RWPE1 (cell line): ENCODE measurements at regions of chr1 and their contacts with region 1.

Region 1: DNA sequence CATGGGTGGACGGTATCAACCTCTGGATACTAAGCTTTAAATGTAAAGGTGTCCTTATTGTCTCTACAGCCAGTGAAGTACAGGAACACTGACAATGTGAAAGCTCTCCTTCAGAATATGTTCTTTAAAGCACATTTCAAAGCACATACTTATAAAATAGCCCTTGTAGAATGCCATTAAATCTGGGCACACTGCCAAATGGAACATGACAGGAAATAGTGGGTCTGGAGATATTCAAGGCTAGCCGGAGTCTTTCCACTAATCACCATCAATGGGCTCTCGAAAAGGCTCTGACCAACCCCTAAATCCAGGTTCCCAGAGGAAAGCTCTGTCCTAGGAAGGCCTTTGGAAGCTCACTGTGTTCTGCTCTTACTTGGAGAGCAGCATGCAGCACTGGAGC is 46.6 kb downstream of the PLD5 start:
- DNase-seq: no peak
- H3K27ac ChIP-seq: no peak overlapping the region
- CTCF ChIP-seq: no peak

Region 2: DNA sequence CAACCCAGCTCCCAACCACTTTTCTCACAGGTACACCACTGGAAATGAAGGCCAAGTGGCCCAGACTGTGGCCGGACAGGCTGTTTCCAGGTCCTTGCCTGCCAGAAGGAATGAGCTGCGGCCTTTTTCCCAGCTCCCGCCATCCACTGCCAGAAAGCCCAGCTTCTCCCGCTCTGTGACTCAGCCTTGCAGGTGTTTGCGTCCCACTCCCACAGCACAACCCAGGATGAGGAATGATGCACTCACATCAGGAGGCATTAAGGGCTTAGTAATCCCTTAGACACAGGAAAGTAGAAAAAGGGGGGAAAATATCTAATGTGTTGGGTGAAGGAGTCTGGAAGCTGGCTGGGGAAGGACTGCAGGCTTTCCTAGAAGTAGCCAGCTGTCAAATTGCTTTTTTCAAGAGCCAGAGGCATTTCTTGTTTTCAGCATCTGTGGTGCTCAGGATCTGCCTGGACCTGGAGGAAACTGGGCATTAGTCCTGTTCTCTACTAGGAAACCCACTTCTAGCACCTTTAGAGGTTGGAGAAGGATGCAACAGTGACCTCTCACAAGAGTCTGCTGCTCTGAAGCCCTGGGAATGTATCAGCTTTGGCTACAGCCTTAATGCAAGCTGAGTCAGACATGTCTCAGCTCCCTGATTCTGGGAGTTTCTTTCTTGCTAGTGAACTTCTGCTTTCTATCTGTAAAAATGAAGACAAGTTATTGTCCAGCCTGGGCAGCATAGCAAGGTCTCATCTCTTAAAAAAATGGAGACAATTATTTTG is 465.9 kb before region 1 on chr1:
- CTCF ChIA-PET with region 1: no interaction called
- POLR2A ChIA-PET with region 1: no interaction called
- DNase-seq: no peak
- H3K27ac ChIP-seq: no peak overlapping the region
- CTCF ChIP-seq: no peak

Region 3: GRCh38 chr1:242454262-242455045 is 23.5 kb before region 1 on chr1:
- CTCF ChIA-PET with region 1: interaction called, 12 read pairs
- POLR2A ChIA-PET with region 1: no interaction called
- DNase-seq: peak; percentile 60
- H3K27ac ChIP-seq: no peak overlapping the region
- CTCF ChIP-seq: peak; percentile 75

Region 4: GRCh38 chr1:242703467-242703866 is 225.5 kb after region 1 on chr1:
- CTCF ChIA-PET with region 1: no interaction called
- POLR2A ChIA-PET with region 1: no interaction called
- DNase-seq: no peak
- H3K27ac ChIP-seq: no peak overlapping the region
- CTCF ChIP-seq: no peak